Activated CD8-positive, alpha-beta T cell treated with anti-CD3 and anti-CD28 coated beads for 36 hours (primary cell): ENCODE measurements at regions of chr20 and their contacts with region 1.

Region 1: DNA sequence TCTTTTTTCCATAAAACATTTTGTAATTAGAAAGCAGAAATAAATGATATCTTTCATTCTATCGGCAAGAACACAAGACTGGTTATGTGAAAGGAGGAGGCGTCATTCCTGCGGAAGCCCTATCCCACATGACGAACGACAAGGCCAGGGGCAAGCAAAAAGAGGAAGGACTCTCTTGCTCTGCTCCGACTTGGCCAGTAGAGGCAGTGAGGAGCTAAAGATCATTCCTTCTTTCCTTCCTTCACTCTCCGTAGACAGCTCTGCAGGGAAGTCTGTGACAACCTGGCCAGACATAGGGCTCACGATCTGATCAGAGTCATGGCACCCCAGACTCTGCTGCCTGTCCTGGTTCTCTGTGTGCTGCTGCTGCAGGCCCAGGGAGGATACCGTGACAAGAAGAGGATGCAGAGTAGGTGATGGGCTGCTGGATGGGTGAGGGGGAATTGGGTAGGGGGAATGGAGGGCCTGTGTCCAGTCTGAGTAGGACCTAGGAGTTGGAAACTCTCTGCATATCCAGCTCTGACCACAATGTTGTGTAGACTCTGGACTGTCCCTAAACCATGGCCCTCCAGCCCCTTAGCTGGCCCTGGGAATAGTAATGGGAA is at the start of gene WFDC10A:
- DNase-seq: peak; percentile 46
- ATAC-seq: peak; percentile 93
- H3K4me3 Mint-ChIP-seq: no peak within 1 kb of the TSS
- H3K27ac Mint-ChIP-seq: no peak within 1 kb of the TSS
- H3K4me1 Mint-ChIP-seq: peaks cover 3% of the 10 kb centered on the region
- H3K27me3 Mint-ChIP-seq: peaks cover 30% of the 10 kb centered on the region
- CTCF ChIP-seq: peak; percentile 68
- total RNA-seq, gene WFDC10A: not detected

Region 2: DNA sequence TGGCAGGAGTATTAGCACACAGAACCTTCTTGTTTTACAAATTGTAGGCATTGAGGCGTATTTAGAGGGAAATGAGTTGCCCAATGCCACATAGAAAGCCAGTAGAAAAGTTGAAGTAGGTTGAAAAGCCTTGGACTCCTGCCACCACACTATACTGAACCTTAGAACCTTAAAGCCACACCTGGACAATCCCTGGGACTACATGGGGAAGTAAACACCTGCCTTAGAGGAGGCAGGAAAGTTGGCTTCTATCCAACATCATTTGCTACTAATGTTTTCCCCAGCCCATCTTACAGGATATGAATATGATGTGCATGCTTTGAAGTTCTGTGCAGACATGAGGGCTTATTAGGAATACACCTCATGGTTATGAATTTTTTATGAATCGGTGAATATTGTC is 77.1 kb before region 1 on chr20:
- CTCF ChIA-PET with region 1: no interaction called
- POLR2A ChIA-PET with region 1: no interaction called
- intact Hi-C with region 1: no loop called
- DNase-seq: no peak
- ATAC-seq: no peak
- H3K4me3 Mint-ChIP-seq: no peak overlapping the region
- H3K27ac Mint-ChIP-seq: no peak overlapping the region
- H3K4me1 Mint-ChIP-seq: no peaks in the 10 kb centered on the region
- H3K27me3 Mint-ChIP-seq: peaks cover 21% of the 10 kb centered on the region
- CTCF ChIP-seq: no peak

Region 3: DNA sequence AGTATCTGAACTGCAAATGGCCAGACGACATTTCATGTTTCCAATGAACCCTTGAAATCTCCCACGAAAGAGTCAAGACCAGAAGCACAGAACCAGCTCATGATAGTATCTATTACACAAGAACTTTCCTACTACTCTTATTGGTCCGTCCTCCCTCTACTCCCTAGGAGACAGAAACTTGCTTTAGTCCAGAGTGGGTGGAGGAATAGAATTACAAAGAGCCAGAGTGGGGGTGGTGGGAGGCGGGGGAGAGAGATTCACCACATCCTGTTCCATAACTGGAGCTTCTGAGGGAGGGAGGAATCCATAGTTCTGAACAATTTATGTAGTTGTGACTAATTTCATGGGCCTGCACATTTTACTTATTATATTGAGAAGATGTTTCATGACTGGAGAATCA is 18.5 kb before region 1 on chr20:
- CTCF ChIA-PET with region 1: interaction called, 12 read pairs
- POLR2A ChIA-PET with region 1: no interaction called
- intact Hi-C with region 1: no loop called
- DNase-seq: peak; percentile 72
- ATAC-seq: peak; percentile 82
- H3K4me3 Mint-ChIP-seq: no peak overlapping the region
- H3K27ac Mint-ChIP-seq: no peak overlapping the region
- H3K4me1 Mint-ChIP-seq: peaks cover 20% of the 10 kb centered on the region
- H3K27me3 Mint-ChIP-seq: peaks cover 29% of the 10 kb centered on the region
- CTCF ChIP-seq: no peak

Region 4: DNA sequence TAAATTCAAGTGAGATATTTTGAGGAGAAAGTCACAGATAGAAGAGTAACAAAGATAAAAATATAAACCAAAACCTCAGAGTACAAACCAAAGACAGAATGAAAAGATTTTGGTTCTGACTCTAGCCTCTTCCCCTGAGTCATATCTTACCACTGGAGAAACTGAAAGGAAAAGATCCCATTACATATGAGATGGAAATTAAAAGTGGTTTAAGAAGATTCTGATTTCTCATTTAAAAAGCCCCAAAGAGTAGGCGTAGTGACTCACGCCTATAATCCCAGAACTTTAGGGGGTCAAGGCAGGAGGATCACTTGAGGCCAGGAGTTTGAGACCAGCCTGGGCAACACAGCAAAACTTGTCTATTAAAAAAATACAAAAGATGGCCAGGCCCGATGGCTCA is 123.1 kb after region 1 on chr20:
- CTCF ChIA-PET with region 1: interaction called, 11 read pairs
- POLR2A ChIA-PET with region 1: no interaction called
- intact Hi-C with region 1: no loop called
- DNase-seq: peak; percentile 54
- ATAC-seq: peak; percentile 79
- H3K4me3 Mint-ChIP-seq: no peak overlapping the region
- H3K27ac Mint-ChIP-seq: peak overlapping the region; percentile 53
- H3K4me1 Mint-ChIP-seq: peaks cover 21% of the 10 kb centered on the region
- H3K27me3 Mint-ChIP-seq: peaks cover 20% of the 10 kb centered on the region
- CTCF ChIP-seq: no peak